AG04449 (cell line): ENCODE measurements at regions of chr7 and their contacts with region 1.

Region 1: GRCh38 chr7:147432079-147432478 is 1158.5 kb upstream of the C7orf33 start:
- DNase-seq: peak; percentile 28
- H3K4me3 ChIP-seq: no peak overlapping the region
- CTCF ChIP-seq: peak; percentile 72

Region 2: GRCh38 chr7:147406521-147407135 is 25.5 kb before region 1 on chr7:
- CTCF ChIA-PET with region 1: no interaction called
- POLR2A ChIA-PET with region 1: no interaction called
- DNase-seq: no peak
- H3K4me3 ChIP-seq: no peak overlapping the region
- CTCF ChIP-seq: no peak

Region 3: GRCh38 chr7:147418966-147419365 is 13.1 kb before region 1 on chr7:
- CTCF ChIA-PET with region 1: interaction called, 19 read pairs
- POLR2A ChIA-PET with region 1: interaction called, 3 read pairs
- DNase-seq: no peak
- H3K4me3 ChIP-seq: no peak overlapping the region
- CTCF ChIP-seq: no peak

Region 4: DNA sequence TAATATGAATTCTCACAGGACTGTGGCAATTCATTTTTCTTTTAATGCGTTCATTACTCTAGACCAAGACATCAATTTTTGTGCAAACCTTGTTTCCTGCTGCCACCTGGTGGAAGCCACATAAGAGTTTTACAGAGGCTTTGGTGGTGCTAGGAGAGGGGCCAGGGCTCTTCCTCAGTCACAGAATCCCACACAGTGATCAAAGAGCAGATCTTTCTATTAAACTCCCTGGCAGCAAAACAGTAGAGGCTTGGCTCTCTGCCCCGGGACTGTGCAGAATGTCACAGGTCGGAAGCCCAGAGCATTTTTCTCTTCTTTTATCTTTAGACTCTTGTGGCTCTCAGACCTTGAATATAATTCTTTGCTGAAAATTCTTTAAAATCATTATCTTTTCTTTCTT is 652.1 kb after region 1 on chr7:
- CTCF ChIA-PET with region 1: interaction called, 14 read pairs
- POLR2A ChIA-PET with region 1: no interaction called
- DNase-seq: peak; percentile 14
- H3K4me3 ChIP-seq: no peak overlapping the region
- CTCF ChIP-seq: peak; percentile 55

Region 5: DNA sequence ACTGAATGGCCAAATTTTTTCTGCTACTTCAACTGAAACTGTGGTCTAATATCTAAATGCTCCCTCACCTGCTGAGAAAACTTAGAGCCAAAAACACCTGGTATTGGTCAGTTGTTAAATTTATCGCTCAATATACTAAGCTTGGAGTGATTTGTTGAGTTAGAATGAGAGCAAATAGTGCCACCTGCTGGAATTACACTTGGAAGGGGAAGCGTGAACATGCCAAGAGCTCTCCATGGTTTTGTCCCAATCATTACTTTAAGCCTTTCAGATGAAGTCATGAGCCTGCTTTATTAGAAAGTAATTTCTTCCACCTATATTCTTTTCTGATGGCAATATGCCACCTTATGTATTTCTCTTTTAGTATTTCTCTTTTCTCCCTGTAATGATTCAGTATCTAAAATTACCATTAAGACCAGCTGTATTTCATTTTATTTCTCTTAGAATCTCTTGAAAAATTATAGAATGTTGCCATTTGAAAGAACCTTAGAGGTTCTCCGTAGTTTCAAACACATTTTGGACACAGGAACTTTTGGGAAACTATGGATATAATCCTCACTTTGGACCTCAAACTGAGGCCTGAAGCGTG is 710.7 kb after region 1 on chr7:
- CTCF ChIA-PET with region 1: interaction called, 13 read pairs
- POLR2A ChIA-PET with region 1: no interaction called
- DNase-seq: no peak
- H3K4me3 ChIP-seq: no peak overlapping the region
- CTCF ChIP-seq: peak; percentile 34

Region 6: DNA sequence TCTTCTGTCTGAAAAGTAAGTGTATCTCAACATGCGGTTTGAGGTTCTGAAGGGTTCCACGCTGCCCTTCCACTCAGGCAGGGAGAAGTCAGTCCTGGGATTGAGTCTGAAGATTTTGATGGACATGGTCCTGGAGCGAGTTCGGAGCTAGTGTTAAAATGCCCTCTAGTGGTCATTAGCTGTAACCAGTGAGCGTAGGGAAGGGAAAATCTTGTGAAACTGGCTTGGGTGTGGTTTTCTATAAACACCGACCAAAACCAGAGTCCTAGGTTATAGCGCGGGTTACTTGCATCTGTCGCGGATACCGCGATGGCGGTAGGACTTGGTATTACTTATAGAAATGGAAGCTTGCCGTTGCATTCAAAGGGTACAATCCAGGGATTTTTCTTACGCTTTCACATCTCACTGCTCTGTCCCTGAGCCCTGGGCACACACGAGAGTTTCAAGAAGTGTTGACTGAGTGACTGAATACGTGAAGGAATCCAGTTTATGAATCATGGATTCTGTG is 810.3 kb after region 1 on chr7:
- CTCF ChIA-PET with region 1: interaction called, 13 read pairs
- POLR2A ChIA-PET with region 1: no interaction called
- DNase-seq: no peak
- H3K4me3 ChIP-seq: no peak overlapping the region
- CTCF ChIP-seq: peak; percentile 49